Activated B cell treated with CpG ODN at 0.5 μM for 24 hours (primary cell): ENCODE measurements at regions of chr1 and their contacts with region 1.

Region 1: DNA sequence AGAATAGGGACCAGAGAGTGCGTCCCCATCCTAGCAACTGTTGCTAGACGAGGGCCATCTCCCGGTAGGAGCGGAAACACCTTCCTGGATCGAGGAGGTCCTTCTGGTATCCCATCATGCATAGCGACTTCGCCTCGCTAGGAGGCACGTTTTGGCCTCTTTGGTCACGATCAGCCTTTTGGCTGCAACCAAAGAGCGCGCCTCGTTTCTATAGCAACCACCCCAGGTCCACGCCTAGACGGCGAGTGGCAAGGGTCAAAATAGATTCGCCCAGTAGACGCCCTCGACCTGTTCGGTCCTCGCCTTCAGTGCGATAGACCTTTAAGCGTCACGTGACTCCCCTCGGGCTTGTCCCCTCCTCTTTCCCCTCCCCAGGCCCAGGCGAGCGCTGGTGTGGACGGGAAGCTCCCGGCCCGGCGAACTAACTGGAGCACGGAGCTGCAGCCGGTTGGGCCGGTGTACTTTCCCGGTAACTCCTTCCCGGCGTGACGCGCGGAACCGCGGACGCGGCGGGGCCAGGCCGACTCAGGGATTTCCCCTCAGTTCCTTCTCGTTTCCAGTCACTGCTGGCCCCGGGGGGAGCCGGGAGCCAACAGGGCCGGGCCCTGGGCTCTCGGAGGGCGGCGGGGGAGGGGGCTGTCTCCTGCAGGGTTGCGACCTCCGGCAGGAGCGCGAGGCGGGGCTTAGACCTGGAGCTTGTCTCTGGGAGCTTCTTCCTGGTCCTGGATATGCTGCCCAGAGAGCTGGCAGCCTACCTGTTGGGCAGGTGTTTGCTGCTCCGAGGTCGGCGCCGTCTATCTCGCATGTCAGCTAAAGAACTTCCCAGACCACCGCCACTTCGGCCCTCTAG is at the start of gene DNAJC16:
- DNase-seq: peak; percentile 90
- ATAC-seq: peak; percentile 33
- H3K4me3 Mint-ChIP-seq: peak within 1 kb of the TSS; percentile 87
- H3K27ac Mint-ChIP-seq: peak within 1 kb of the TSS; percentile 99
- H3K4me1 Mint-ChIP-seq: peaks cover 49% of the 10 kb centered on the region
- H3K27me3 Mint-ChIP-seq: no peaks in the 10 kb centered on the region
- CTCF ChIP-seq: no peak
- total RNA-seq, gene DNAJC16: 35.5 and 35.9 TPM in 2 replicates

Region 2: GRCh38 chr1:13730751-13731482 is 1795.8 kb before region 1 on chr1:
- CTCF ChIA-PET with region 1: no interaction called
- POLR2A ChIA-PET with region 1: no interaction called
- intact Hi-C with region 1: loop called (anchors 10 kb)
- DNase-seq: peak; percentile 76
- ATAC-seq: peak; percentile 89
- H3K4me3 Mint-ChIP-seq: peak overlapping the region; percentile 82
- H3K27ac Mint-ChIP-seq: peak overlapping the region; percentile 97
- H3K4me1 Mint-ChIP-seq: peaks cover 99% of the 10 kb centered on the region
- H3K27me3 Mint-ChIP-seq: no peaks in the 10 kb centered on the region
- CTCF ChIP-seq: no peak

Region 3: GRCh38 chr1:15153842-15154479 is 372.8 kb before region 1 on chr1:
- CTCF ChIA-PET with region 1: no interaction called
- POLR2A ChIA-PET with region 1: no interaction called
- intact Hi-C with region 1: no loop called
- DNase-seq: peak; percentile 30
- ATAC-seq: no peak
- H3K4me3 Mint-ChIP-seq: peak overlapping the region; percentile 44
- H3K27ac Mint-ChIP-seq: no peak overlapping the region
- H3K4me1 Mint-ChIP-seq: peaks cover 23% of the 10 kb centered on the region
- H3K27me3 Mint-ChIP-seq: peaks cover 34% of the 10 kb centered on the region
- CTCF ChIP-seq: no peak

Region 4: GRCh38 chr1:15573477-15573876 is 46.8 kb after region 1 on chr1:
- CTCF ChIA-PET with region 1: no interaction called
- POLR2A ChIA-PET with region 1: interaction called, 10 read pairs
- intact Hi-C with region 1: loop called (anchors 1 kb)
- DNase-seq: no peak
- ATAC-seq: no peak
- H3K4me3 Mint-ChIP-seq: peak overlapping the region; percentile 24
- H3K27ac Mint-ChIP-seq: peak overlapping the region; percentile 86
- H3K4me1 Mint-ChIP-seq: peaks cover 43% of the 10 kb centered on the region
- H3K27me3 Mint-ChIP-seq: no peaks in the 10 kb centered on the region
- CTCF ChIP-seq: no peak

Region 5: DNA sequence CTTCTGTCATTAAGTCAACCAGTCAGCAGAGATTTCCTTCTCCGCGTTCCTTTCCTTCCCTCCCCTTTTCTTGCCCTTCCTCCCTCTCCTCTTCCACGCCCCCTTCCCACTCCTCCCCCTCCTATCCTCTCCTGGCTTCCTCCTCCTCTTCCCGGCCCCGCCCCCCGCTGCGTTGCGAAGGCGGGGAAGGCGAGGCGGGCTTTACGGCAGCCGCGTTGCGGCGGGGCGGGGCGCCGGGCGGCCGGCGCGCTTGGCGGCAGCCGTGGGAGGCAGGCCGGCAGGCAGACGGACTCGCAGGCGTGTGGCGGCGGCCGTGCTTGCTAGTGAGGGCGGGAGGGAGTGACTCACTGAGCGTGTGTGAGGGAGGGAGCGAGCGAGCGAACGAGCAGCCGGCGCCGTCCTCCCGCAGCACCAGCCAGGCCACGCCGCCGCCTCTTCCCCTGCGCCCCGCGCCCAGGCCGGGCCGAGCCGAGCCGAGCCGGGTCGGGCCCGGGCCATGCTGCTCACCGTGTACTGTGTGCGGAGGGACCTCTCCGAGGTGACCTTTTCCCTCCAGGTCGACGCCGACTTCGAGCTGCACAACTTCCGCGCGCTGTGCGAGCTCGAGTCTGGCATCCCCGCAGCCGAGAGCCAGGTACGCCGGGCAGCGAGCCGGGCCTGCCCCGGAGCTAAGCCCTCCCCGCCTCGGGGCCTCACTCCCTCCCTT is 90.6 kb after region 1 on chr1 and contains the start of gene DDI2:
- CTCF ChIA-PET with region 1: no interaction called
- POLR2A ChIA-PET with region 1: interaction called, 14 read pairs
- intact Hi-C with region 1: loop called (anchors 1 kb)
- DNase-seq: peak; percentile 93
- ATAC-seq: peak; percentile 89
- H3K4me3 Mint-ChIP-seq: peak within 1 kb of the TSS; percentile 92
- H3K27ac Mint-ChIP-seq: peak within 1 kb of the TSS; percentile 96
- H3K4me1 Mint-ChIP-seq: peaks cover 47% of the 10 kb centered on the region
- H3K27me3 Mint-ChIP-seq: no peaks in the 10 kb centered on the region
- CTCF ChIP-seq: no peak
- total RNA-seq, gene DDI2: 45.8 and 59.1 TPM in 2 replicates

Region 6: DNA sequence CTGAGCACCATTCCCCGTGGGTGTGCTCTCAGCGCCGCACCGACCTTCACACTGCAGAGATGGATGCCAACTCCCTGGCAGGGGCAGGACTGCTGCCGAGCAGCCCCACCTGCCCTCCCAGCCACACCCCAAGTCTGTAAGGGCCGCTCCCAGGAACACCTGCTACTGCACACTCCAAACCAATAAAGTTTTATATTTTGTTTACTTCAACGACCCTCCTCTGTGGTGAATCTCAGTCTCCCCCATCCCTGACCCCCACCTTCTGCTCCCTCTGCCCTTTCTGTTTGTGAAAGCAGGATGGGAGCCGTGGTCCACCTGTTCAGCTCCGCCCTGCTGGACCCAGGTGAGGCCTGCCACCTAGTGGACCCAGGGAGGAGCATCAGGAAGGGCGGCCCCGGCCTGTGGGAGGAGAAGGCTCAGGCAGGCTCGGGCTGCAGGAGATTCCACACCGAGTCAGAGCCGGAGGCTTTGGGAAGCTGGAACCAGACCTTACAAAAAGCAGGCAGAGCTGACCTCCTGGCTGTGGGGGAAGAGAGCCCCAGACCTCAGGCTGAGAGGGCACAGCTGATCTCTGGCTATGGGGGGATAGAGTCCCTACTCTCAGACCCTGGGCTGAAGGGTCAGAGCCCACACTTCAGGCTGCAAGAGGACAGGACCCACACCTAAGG is 214.6 kb after region 1 on chr1:
- CTCF ChIA-PET with region 1: interaction called, 3 read pairs
- POLR2A ChIA-PET with region 1: interaction called, 4 read pairs
- intact Hi-C with region 1: loop called (anchors 2 kb)
- DNase-seq: peak; percentile 66
- ATAC-seq: peak; percentile 94
- H3K4me3 Mint-ChIP-seq: no peak overlapping the region
- H3K27ac Mint-ChIP-seq: no peak overlapping the region
- H3K4me1 Mint-ChIP-seq: peaks cover 6% of the 10 kb centered on the region
- H3K27me3 Mint-ChIP-seq: no peaks in the 10 kb centered on the region
- CTCF ChIP-seq: no peak

Region 7: GRCh38 chr1:16206547-16207317 is 680.0 kb after region 1 on chr1:
- CTCF ChIA-PET with region 1: no interaction called
- POLR2A ChIA-PET with region 1: no interaction called
- intact Hi-C with region 1: loop called (anchors 2 kb)
- DNase-seq: peak; percentile 82
- ATAC-seq: peak; percentile 89
- H3K4me3 Mint-ChIP-seq: peak overlapping the region; percentile 91
- H3K27ac Mint-ChIP-seq: peak overlapping the region; percentile 91
- H3K4me1 Mint-ChIP-seq: peaks cover 3% of the 10 kb centered on the region
- H3K27me3 Mint-ChIP-seq: no peaks in the 10 kb centered on the region
- CTCF ChIP-seq: no peak

Region 8: DNA sequence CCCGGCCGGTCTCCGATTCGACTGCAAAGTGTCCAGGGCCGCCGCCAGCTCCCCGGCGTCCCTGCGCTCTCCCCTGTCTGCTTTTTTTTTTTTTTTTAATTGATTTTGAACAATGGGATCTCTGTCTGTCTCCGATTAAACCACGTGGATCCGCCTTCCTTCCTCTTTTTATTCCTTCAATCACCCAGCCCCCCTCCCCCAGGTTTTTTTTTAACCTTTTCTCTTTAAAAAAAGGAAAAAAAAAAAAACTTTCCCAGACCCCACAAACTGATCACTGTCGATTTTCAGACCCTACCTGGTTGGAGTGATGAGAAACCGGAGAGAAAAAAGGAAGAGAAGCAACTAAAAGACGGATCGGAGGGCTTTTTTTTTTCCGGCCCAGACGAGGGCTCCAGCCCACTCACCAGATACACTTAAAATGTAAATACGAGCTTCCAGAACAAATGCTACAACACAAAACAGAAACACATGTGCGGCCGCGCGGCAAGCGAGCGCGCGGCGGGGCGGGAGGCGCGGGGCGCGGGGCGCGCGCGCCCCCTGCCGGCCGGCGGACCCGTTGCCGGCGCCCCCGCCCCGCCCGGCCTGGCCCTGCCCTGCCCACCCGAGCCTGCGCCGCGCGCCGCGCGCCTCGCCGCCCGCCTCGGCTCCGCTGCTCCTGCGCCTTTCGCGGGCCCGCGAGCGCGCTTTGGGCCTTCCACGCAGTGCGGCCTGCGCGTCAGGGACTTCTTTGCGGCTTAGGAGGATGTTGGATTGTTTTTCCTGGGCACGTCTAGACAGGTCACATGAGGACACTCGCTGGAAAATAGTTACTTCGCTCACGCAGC is 1912.7 kb after region 1 on chr1 and contains the start of gene RCC2:
- CTCF ChIA-PET with region 1: no interaction called
- POLR2A ChIA-PET with region 1: no interaction called
- intact Hi-C with region 1: loop called (anchors 10 kb)
- DNase-seq: peak; percentile 67
- ATAC-seq: peak; percentile 67
- H3K4me3 Mint-ChIP-seq: peak within 1 kb of the TSS; percentile 96
- H3K27ac Mint-ChIP-seq: peak within 1 kb of the TSS; percentile 98
- H3K4me1 Mint-ChIP-seq: peaks cover 39% of the 10 kb centered on the region
- H3K27me3 Mint-ChIP-seq: peaks cover 11% of the 10 kb centered on the region
- CTCF ChIP-seq: no peak
- total RNA-seq, gene RCC2: 79.4 and 85.1 TPM in 2 replicates